Colonic mucosa (tissue), 4 donors: ENCODE measurements at regions of chr12 and their contacts with region 1.

Region 1: GRCh38 chr12:120640840-120641833 is 711 bp downstream of the CABP1 start:
- DNase-seq: peak; percentile 58
- H3K4me3 ChIP-seq: peak overlapping the region; percentile 47
- H3K27ac ChIP-seq: no peak overlapping the region
- H3K4me1 ChIP-seq: peaks cover 3% of the 10 kb centered on the region
- H3K27me3 ChIP-seq: peaks cover 40% of the 10 kb centered on the region
- CTCF ChIP-seq: no peak

Region 2: DNA sequence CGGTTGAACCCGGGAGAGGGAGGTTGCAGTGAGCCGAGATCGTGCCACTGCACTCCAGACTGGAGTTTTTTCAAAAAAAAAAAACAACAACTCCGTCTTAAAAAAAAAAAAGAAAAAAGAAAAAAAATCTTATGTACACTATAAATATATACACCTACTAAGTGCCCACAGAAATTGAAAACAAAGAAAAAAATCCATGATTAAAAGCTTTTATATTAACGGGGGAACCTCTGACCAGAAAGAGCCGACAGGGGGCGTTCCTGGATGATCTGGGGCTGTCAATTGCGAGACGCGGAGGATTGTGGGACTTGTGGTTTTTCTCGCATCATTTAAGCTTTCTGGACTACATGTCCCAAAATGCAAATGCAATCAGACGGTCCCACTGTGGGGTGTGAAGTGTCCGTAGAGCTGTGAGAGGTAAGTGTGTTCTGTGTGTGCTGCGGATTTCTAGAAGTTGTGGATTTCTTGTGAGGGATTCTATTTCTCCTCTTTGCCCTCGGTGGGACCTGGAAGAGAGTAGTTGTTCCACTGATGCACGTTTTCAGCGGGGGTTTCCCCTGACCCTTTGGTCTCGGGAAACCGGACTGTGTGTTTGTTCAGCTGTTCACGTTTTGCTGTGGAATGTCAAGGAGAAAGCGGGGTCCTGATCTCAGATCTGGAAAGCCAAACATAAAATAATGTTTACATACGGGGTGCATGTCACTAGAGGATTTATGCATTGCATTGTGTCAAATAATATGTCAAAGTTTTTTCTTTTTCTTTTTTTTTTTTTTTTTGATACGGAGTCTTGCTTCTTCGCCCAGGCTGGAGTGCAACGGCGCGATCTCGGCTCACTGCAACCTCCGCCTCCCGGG is 338.9 kb before region 1 on chr12 and contains the start of gene SIRT4:
- intact Hi-C with region 1: no loop called
- DNase-seq: peak; percentile 95
- H3K4me3 ChIP-seq: peak within 1 kb of the TSS; percentile 64
- H3K27ac ChIP-seq: peak within 1 kb of the TSS; percentile 71
- H3K4me1 ChIP-seq: no peaks in the 10 kb centered on the region
- H3K27me3 ChIP-seq: no peaks in the 10 kb centered on the region
- CTCF ChIP-seq: peak; percentile 74
- total RNA-seq, gene SIRT4: 1.3 to 1.6 TPM

Region 3: DNA sequence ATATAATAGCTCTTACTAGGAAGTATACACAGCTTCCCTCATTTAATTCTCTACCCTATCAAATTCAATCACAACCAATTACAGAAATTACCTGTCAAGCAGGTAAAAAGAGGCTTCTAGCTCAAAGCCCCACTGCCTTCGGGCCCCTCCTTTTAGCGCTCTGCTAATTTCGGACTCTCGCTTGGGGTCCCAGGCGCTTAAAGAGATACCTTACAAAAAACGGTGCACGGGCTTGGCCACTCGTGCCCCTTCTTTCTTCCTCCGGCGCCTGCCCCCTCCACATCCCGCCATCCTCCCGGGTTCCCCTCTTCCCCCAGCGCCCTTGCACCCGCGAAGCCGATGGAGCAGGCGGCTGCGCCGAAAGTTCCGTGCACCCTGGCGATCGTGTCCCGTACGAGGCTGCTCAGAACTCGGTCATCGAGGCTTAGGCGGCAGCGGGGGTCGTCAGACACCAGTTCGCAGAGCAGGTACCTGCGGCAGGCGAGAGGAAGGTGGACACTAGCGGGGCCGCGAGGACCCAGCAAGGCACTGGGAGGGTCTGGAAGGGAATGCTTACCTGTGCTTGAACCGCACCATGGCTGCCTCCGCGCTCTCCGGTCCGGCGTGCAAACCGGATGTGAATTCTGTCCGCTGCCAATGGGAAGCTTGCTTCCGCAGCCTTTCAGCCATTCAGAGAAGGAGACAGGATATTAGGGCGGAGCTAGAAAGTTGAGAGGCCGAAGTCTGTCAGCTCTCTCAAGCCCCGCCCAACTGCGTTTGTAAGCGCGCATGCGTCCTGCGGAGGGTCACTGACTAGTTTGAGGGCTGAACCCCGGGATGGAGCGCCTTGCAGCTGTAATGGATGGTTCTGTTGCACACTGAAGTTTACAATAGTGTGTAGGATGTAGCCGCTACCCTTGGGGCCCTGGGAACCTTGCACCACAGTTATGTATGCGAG is 60.1 kb before region 1 on chr12 and contains the start of gene POP5:
- intact Hi-C with region 1: no loop called
- DNase-seq: peak; percentile 99
- H3K4me3 ChIP-seq: peak within 1 kb of the TSS; percentile 62
- H3K27ac ChIP-seq: peak within 1 kb of the TSS; percentile 34
- H3K4me1 ChIP-seq: peaks cover 11% of the 10 kb centered on the region
- H3K27me3 ChIP-seq: no peaks in the 10 kb centered on the region
- CTCF ChIP-seq: no peak
- total RNA-seq, gene POP5: 22.8 to 77.7 TPM

Region 4: DNA sequence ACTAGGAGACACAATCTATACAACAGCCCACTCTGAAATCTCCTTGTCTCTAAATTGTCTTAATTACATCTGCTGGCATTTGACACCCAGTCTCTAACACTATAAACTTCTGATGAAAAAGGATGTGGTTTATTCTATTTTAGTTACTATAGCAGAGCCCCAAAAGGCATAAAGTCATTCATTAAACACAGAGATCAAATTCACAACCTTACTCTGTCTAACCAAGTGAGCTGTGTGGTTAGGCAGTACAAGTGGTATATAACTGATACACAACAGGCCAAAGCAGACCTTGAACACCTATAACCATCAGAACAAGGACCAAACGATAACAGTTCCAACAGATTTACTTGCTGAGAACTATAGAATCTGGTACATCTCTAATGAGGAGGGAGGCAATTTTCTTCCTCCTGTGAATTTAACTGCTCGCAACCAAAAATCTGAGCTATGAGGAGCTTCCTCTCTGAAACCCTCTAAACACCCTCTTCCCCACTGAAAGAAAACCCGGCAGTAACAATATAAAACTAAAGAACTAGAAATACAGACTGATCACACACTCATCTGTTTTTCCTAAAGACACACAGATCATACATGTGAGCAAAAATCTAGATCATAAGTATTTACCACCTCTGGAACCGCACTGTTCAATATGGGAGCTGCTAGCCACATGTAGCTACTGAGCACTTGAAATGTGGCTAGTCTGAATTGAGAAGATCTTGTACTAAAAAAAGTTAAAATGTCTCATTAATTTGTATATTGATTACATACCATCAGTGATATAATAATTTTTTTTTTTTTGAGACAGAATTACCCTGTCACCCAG is 245.3 kb after region 1 on chr12:
- intact Hi-C with region 1: no loop called
- DNase-seq: no peak
- H3K4me3 ChIP-seq: no peak overlapping the region
- H3K27ac ChIP-seq: no peak overlapping the region
- H3K4me1 ChIP-seq: no peaks in the 10 kb centered on the region
- H3K27me3 ChIP-seq: no peaks in the 10 kb centered on the region
- CTCF ChIP-seq: no peak

Region 5: DNA sequence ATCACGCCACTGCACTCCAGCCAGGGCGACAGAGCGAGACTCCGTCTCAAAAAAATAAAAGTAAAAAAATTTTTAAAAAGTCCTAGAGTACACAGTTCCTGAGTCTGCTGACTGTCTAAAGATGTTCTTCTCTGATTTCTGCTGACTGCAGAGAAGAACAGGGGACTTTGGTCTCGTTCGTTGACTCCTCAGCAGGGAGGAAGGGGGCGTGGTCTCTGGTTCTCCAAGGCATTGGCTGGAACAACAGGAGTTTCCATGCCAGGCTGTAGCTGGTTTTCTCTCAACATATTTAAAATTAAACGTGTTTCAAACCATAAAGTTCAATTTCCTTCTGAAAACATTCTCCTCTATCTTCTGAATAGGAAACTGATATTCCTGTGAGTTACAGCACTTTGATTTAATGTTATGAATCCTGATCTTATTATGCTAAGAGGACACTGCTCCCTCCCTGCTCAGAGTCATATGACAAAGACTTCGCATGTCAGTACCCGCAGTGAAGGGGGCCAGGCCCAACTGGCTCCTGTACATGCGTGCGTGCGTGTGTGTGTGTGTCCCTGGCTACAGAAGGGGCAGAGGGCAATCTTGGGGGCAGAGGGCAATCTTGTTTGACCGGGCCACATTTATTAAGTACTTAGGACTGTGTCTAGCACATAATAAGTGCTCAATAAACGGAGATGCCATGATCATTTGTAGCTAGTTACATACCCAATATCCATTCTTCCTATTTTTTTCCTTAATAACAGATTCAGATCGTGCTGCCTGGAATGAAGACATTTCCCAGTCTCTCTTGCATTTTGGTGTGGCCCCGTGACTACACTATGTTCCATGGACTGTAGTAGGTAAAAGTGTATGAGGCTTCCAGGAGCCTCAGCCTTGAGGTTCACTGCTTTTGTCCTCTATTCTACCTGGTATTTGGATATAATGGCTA is 320.7 kb after region 1 on chr12:
- intact Hi-C with region 1: loop called (anchors 10 kb)
- DNase-seq: peak; percentile 95
- H3K4me3 ChIP-seq: no peak overlapping the region
- H3K27ac ChIP-seq: peak overlapping the region; percentile 91
- H3K4me1 ChIP-seq: peaks cover 5% of the 10 kb centered on the region
- H3K27me3 ChIP-seq: no peaks in the 10 kb centered on the region
- CTCF ChIP-seq: no peak